Activated CD8-positive, alpha-beta T cell treated with anti-CD3 and anti-CD28 coated beads, Interleukin-2, amount 10 ng/mL, durations not matched to agents 7 days and 5 days (primary cell): ENCODE measurements at regions of chr3 and their contacts with region 1.

Region 1: GRCh38 chr3:167684388-167684993 is 30.7 kb upstream of the WDR49 start:
- DNase-seq: peak; percentile 72
- ATAC-seq: peak; percentile 77
- H3K4me3 Mint-ChIP-seq: no peak overlapping the region
- H3K27ac Mint-ChIP-seq: no peak overlapping the region
- H3K4me1 Mint-ChIP-seq: no peaks in the 10 kb centered on the region
- H3K27me3 Mint-ChIP-seq: no peaks in the 10 kb centered on the region

Region 2: GRCh38 chr3:167330993-167331785 is 353.3 kb before region 1 on chr3:
- CTCF ChIA-PET with region 1: no interaction called
- POLR2A ChIA-PET with region 1: no interaction called
- DNase-seq: no peak
- ATAC-seq: no peak
- H3K4me3 Mint-ChIP-seq: no peak overlapping the region
- H3K27ac Mint-ChIP-seq: no peak overlapping the region
- H3K4me1 Mint-ChIP-seq: no peaks in the 10 kb centered on the region
- H3K27me3 Mint-ChIP-seq: no peaks in the 10 kb centered on the region

Region 3: GRCh38 chr3:167473863-167474262 is 210.6 kb before region 1 on chr3 and contains the start of gene SERPINI2:
- CTCF ChIA-PET with region 1: no interaction called
- POLR2A ChIA-PET with region 1: no interaction called
- DNase-seq: no peak
- ATAC-seq: no peak
- H3K4me3 Mint-ChIP-seq: no peak within 1 kb of the TSS
- H3K27ac Mint-ChIP-seq: no peak within 1 kb of the TSS
- H3K4me1 Mint-ChIP-seq: no peaks in the 10 kb centered on the region
- H3K27me3 Mint-ChIP-seq: no peaks in the 10 kb centered on the region
- total RNA-seq, gene SERPINI2: not detected

Region 4: GRCh38 chr3:167671878-167672427 is 12.5 kb before region 1 on chr3:
- CTCF ChIA-PET with region 1: interaction called, 24 read pairs
- POLR2A ChIA-PET with region 1: no interaction called
- DNase-seq: no peak
- ATAC-seq: no peak
- H3K4me3 Mint-ChIP-seq: no peak overlapping the region
- H3K27ac Mint-ChIP-seq: no peak overlapping the region
- H3K4me1 Mint-ChIP-seq: no peaks in the 10 kb centered on the region
- H3K27me3 Mint-ChIP-seq: no peaks in the 10 kb centered on the region

Region 5: DNA sequence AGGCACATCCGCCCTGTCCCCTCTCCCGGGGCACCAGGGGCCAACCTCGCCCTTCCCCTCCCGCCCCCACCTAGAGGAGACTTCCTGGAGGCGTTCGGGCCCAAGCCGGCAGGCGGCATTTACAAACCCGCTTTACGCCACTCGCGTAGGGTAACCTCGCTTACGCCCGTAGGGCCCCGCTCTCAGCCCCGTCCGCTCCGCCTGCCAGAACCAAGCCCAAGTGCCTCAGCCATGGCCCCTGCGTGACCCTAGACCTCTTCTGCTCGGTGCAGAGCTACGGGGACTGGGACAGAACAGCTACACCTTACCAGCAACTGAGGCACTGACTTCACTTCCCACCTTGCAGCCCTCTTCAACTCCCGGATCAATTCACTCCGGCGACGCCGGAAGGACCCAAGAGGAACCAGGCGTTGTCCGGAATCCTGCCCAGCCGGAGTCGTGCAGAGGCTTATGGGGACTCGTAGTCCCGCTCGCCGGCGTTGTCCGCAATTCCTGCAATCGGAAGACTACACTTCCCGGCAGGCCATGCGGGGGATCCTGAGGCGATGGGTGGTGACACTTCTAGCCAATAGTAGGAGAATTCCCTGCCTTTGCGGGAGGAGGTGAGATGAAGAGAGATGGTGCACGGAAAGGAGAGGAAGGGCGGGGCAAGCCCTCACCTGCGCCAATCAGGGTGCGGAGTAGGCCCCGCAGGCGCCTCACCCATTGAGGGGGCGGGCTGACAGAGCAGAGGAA is 50.2 kb after region 1 on chr3 and contains the start of gene PDCD10:
- CTCF ChIA-PET with region 1: interaction called, 13 read pairs
- POLR2A ChIA-PET with region 1: no interaction called
- DNase-seq: peak; percentile 98
- ATAC-seq: peak; percentile 90
- H3K4me3 Mint-ChIP-seq: no peak within 1 kb of the TSS
- H3K27ac Mint-ChIP-seq: no peak within 1 kb of the TSS
- H3K4me1 Mint-ChIP-seq: peaks cover 34% of the 10 kb centered on the region
- H3K27me3 Mint-ChIP-seq: no peaks in the 10 kb centered on the region
- total RNA-seq, gene PDCD10: 69.6 to 72.2 TPM